Gastrocnemius medialis (tissue), 4 donors: ENCODE measurements at regions of chr20 and their contacts with region 1.

Region 1: DNA sequence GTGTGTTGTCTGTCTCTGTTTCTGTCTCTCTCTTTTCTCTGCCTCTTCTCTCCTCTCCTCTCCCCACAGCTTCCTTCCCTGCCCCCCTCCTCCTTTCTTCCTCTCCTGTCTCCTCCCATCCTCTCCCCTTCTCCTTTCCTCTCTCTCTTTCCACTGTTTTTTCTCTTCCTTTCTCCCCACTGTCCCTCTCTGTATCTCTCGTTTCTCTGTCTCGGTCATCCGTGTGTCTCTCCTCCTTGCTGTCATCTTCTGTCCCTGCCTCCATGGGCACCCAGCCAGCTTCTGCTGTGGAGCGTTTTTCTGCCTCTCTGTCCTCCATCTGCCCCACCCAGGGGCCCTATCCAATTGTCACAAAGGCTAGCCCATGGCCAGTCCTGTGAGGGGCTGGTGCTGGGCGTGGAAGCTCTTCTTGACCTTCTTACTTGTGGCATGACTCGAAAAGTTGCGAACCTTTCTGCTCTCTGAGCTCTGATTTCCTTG is 69.1 kb downstream of the CEBPB start:
- DNase-seq: no peak
- ATAC-seq: peak in 1 of 2 donors; percentile 24
- H3K4me3 ChIP-seq: no peak overlapping the region
- H3K27ac ChIP-seq: peak overlapping the region in 3 of 4 donors; percentile 17 to 47 (median 23)
- H3K4me1 ChIP-seq: peaks cover 0 to 6% of the 10 kb centered on the region in 2 donors
- H3K27me3 ChIP-seq: no peaks in the 10 kb centered on the region
- CTCF ChIP-seq: no peak
- POLR2A ChIP-seq: no peak

Region 2: DNA sequence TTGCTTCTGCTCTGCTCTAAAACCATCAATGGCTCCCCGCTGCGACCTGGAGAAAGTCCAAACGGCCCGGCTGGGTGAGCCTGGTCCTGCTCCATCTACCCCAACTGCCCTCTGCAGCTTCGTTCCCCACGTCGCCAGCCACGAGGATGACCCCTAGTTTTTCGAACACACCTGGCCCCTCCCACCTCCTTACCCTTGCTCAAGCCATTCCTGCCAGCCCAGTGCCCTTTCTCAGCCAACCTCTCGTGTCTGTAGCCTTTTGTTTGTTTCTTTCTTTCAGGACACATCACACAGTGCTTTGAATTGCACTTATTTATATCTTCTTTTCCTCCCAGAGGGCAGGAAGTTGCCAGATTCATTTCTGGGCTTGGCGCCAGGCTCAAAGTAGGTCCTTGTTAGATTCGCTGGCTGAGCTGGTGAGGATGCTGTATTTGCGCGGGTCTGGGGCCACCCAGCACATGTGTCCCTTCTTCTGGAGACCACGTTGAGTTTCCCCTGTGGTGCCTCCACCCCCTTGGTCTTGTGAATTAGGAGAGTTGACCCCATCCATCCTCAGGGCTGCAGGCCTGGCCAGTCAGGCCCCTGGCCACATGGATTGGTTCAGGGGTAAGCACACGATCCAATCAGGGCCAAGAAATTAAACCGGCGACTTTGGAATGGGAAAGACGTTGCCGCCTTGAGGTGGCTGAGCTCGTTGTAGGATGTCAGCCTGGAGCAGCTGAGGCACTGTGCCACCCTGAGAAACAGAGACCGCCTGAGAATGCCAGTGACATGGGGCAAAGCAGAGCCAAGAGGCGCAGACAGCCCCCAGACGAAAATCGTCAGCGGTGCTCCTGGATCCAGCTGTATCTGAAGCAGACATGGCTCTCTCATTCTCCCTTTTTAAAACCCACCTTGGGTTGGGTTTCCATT is 86.9 kb after region 1 on chr20:
- in situ Hi-C with region 1: no loop called
- intact Hi-C with region 1: loop called (anchors 5 kb)
- DNase-seq: peak; percentile 84 to 88
- ATAC-seq: peak; percentile 88 to 91
- H3K4me3 ChIP-seq: peak overlapping the region in 1 of 4 donors; percentile 21
- H3K27ac ChIP-seq: peak overlapping the region; percentile 67 to 82 (median 74)
- H3K4me1 ChIP-seq: peaks cover 23 to 25% of the 10 kb centered on the region in 2 donors
- H3K27me3 ChIP-seq: no peaks in the 10 kb centered on the region
- CTCF ChIP-seq: no peak
- POLR2A ChIP-seq: peak in 1 of 2 donors; percentile 0